Transverse colon (tissue), 4 donors: ENCODE measurements at regions of chr12 and their contacts with region 1.

Region 1: DNA sequence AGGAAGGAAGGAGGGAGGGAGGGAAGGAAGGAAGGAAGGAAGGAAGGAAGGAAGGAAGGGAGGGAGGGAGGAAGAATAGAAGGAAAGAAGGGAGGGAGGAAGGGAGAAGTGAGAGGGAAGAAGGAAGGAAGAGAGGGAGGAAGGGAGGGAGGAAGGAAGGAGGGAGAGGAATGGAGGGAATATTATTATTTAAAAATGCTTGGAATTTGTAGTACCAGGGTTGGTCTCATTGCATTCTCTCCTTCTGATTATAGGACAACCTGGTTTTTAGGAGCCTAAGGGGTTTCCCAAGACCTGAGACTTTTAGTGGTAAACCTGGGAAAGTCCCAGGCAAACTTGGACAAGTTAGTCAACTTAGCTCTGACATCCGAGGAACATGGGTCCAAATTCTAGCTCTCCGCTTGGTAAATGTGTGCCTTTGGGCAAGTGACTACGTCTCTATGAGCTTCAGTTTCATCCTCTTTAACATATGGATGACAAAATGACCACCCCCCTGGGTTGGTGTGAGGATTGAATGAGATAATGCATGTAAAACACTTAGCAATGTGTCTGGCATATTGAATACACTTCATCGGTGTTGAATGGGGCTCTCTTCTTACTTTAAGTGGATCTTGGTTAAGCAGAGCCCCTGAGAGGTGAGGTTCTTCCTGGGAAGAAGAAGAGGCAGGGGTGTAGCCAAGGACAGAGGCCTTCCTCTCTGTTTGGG is 690.7 kb upstream of the TBX3 start:
- DNase-seq: no peak
- H3K4me3 ChIP-seq: no peak overlapping the region
- H3K27ac ChIP-seq: no peak overlapping the region
- H3K4me1 ChIP-seq: peaks cover 0 to 7% (median 0%) of the 10 kb centered on the region in 4 donors
- H3K27me3 ChIP-seq: no peaks in the 10 kb centered on the region
- CTCF ChIP-seq: no peak
- EP300 ChIP-seq: no peak
- POLR2A ChIP-seq: no peak

Region 2: GRCh38 chr12:115394496-115395208 is 20.0 kb after region 1 on chr12:
- in situ Hi-C with region 1: no loop called
- intact Hi-C with region 1: loop called (anchors 1 kb)
- DNase-seq: no peak
- H3K4me3 ChIP-seq: no peak overlapping the region
- H3K27ac ChIP-seq: no peak overlapping the region
- H3K4me1 ChIP-seq: no peaks in the 10 kb centered on the region
- H3K27me3 ChIP-seq: no peaks in the 10 kb centered on the region
- CTCF ChIP-seq: no peak
- EP300 ChIP-seq: no peak
- POLR2A ChIP-seq: no peak